Activated CD4-positive, alpha-beta T cell treated with anti-CD3 and anti-CD28 coated beads for 36 hours (primary cell): ENCODE measurements at regions of chr14 and their contacts with region 1.

Region 1: DNA sequence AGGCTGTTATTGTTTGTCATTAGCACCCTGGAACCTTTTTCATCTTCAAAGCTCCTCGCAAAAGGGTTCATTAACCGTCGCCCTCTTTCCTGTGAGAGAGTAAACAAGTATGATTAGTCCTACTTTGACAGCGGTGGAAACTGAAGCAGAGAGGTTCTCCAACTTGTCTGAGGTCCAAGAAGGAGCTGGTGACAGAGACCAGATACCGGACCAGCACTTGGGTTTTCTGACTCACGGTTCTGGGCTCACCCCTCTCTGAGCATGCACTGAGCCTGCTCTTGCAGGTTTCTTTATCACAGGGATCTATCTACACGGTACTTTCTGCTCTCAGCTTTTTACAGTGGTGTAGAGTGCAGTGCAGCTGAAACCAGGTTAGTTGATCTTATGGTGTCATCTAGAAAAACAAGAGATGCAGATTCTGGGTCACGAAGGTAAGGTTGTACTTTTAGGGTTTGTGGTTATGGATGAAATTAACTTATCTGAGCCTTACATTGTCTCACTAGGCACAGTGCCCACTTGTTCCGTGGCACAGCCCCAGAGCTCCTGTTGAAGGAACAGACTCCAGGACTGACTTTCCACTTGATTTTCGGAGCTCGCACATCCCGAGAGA is 62.1 kb downstream of the PPP2R5C start:
- DNase-seq: peak; percentile 87
- ATAC-seq: peak; percentile 80
- H3K4me3 Mint-ChIP-seq: peak overlapping the region; percentile 68
- H3K27ac Mint-ChIP-seq: peak overlapping the region; percentile 97
- H3K4me1 Mint-ChIP-seq: peaks cover 87% of the 10 kb centered on the region
- H3K27me3 Mint-ChIP-seq: no peaks in the 10 kb centered on the region

Region 2: GRCh38 chr14:101707068-101707842 is 116.4 kb before region 1 on chr14:
- CTCF ChIA-PET with region 1: interaction called, 5 read pairs
- POLR2A ChIA-PET with region 1: no interaction called
- intact Hi-C with region 1: loop called (anchors 2 to 5 kb)
- DNase-seq: peak; percentile 74
- ATAC-seq: peak; percentile 79
- H3K4me3 Mint-ChIP-seq: peak overlapping the region; percentile 33
- H3K27ac Mint-ChIP-seq: peak overlapping the region; percentile 81
- H3K4me1 Mint-ChIP-seq: peaks cover 29% of the 10 kb centered on the region
- H3K27me3 Mint-ChIP-seq: no peaks in the 10 kb centered on the region

Region 3: DNA sequence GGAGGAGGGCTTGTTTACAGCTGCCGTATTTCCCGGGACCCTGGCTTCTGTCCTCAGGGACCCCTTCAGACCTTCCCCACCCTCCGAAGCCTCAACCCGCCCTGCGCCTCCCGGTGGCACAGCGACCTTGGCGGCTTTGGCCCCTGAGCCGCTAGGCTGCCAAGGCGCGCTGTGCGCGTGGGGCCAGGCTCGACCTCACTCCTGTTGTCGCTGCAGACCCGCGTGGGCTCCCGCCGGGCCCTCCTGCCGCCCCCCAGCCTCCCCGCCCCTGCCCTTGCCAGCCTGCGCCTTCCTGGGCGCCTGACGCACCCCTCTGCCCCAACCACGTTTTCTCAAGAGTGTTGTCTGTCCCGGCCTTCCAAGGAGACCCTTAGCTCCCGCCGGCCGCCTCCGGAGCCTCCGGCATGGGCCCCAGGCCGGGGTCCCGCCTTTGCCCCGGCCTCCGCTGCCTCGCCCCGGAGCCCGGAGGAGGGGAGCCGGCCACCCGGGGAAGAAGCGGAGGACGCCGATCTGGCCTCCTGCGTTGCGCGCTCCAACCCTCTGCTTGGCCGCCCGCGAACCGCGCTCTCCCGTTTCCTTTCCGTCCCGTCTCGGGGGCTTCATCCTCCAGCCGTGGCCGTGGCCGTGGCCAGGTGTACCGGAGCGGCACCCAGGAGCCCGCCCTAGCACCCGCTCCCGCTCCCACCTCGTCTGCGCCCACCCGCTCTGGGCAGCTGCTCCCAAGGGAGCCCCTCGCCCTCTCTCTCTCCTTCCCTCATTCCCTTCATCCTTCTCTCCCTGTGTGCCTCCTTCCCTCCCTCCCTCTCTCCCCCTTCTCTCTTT is 42.2 kb before region 1 on chr14:
- CTCF ChIA-PET with region 1: interaction called, 5 read pairs
- POLR2A ChIA-PET with region 1: interaction called, 10 read pairs
- intact Hi-C with region 1: no loop called
- DNase-seq: peak; percentile 56
- ATAC-seq: peak; percentile 72
- H3K4me3 Mint-ChIP-seq: peak overlapping the region; percentile 47
- H3K27ac Mint-ChIP-seq: peak overlapping the region; percentile 16
- H3K4me1 Mint-ChIP-seq: peaks cover 30% of the 10 kb centered on the region
- H3K27me3 Mint-ChIP-seq: peaks cover 7% of the 10 kb centered on the region

Region 4: GRCh38 chr14:101843665-101844064 is 20.0 kb after region 1 on chr14:
- CTCF ChIA-PET with region 1: interaction called, 8 read pairs
- POLR2A ChIA-PET with region 1: interaction called, 11 read pairs
- intact Hi-C with region 1: no loop called
- DNase-seq: peak; percentile 78
- ATAC-seq: peak; percentile 66
- H3K4me3 Mint-ChIP-seq: no peak overlapping the region
- H3K27ac Mint-ChIP-seq: peak overlapping the region; percentile 82
- H3K4me1 Mint-ChIP-seq: peaks cover 87% of the 10 kb centered on the region
- H3K27me3 Mint-ChIP-seq: no peaks in the 10 kb centered on the region

Region 5: DNA sequence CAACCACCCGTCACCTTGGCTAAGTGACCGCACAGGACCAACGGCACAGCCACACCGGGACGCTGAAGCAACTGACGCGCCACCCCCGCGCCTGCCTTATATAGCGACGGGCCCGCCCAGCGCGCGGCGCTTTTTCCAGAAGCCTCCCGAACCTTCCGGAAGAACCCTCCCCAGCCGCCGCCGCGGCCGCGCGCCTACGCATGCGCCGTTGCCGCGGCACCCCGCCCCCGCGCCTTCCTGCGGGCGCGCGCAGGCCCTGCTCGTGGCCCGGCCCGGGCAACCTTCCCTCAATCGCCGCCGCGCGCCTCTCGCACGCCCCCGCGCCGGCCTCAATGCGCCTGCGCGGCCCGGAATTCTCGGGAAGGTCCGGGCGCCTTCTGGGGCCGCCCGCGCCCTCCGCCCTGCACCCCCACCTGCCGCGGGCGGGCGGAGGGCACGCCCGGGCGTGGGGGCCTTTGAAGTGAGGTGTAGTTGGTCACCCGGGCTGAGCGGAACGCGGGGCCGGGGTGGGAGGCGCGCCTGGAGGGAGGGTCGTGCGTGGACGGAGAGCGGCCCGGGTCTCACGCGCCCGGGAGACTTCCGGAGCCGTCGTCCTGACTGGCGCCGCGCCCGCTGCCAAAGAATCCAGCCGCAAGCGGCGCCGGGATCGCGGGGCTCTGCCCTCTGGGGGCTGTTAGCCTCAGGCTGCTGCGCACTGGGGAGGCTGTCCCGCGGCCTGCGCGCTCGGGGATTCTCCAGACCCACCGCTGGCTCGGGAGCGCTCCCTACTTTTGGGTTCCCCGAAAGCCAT is 263.6 kb after region 1 on chr14 and contains the start of gene HSP90AA1:
- CTCF ChIA-PET with region 1: interaction called, 6 read pairs
- POLR2A ChIA-PET with region 1: no interaction called
- intact Hi-C with region 1: loop called (anchors 1 to 5 kb)
- DNase-seq: peak; percentile 97
- ATAC-seq: peak; percentile 68
- H3K4me3 Mint-ChIP-seq: peak within 1 kb of the TSS; percentile 77
- H3K27ac Mint-ChIP-seq: peak within 1 kb of the TSS; percentile 92
- H3K4me1 Mint-ChIP-seq: peaks cover 46% of the 10 kb centered on the region
- H3K27me3 Mint-ChIP-seq: no peaks in the 10 kb centered on the region
- total RNA-seq, gene HSP90AA1: 1,344 to 1,372 TPM

Region 6: DNA sequence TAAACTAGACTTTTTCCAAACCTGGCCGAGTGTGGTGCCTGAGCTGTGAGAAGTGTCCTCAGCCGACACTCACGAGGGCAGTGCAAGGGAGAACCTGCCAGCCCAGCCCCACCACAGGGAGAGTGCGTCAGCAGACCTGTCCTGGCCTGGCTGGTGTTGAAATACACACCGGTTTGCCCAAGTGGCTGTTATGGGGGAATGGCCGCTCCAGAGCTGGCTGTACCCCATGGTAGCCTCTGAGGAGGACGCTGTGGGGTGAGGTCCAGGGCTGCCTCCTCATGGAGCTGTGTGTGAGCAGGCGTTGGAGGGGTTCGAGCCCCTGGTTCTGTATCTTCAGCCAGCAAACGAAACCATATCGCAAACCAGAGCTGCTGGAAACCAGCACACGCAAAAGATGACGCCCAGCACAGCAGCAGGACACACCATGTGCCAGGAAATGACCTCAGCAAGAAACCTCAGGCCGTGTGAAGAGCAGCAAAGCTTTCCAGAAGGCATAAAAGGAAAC is 676.6 kb after region 1 on chr14:
- CTCF ChIA-PET with region 1: no interaction called
- POLR2A ChIA-PET with region 1: no interaction called
- intact Hi-C with region 1: no loop called
- DNase-seq: peak; percentile 33
- ATAC-seq: no peak
- H3K4me3 Mint-ChIP-seq: no peak overlapping the region
- H3K27ac Mint-ChIP-seq: peak overlapping the region; percentile 72
- H3K4me1 Mint-ChIP-seq: peaks cover 7% of the 10 kb centered on the region
- H3K27me3 Mint-ChIP-seq: no peaks in the 10 kb centered on the region

Region 7: DNA sequence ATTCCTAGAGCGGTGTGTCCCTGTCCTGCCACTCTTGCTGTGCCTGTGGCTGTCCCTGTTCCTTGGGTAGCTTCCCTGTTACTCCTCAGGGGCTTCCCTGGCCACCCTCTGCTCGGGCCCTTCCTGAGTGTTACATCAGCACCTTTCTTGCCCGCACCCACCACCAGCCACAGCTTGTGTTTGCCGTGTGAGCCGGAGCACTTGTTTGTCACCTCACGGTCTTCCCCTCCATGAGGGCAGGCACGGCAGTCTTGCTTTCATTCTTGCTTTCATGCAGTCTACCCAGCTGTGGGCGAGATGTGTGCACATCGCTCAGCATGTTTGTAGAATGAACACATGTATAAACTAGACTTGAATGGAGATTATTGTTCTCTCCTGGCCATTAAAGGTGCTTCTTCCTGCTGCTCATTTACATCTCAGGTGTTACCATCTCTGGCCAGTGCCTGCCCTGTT is 995.6 kb after region 1 on chr14:
- CTCF ChIA-PET with region 1: no interaction called
- POLR2A ChIA-PET with region 1: interaction called, 3 read pairs
- intact Hi-C with region 1: loop called in 1 of 2 experiments (anchors 5 kb)
- DNase-seq: peak; percentile 91
- ATAC-seq: peak; percentile 74
- H3K4me3 Mint-ChIP-seq: peak overlapping the region; percentile 61
- H3K27ac Mint-ChIP-seq: peak overlapping the region; percentile 94
- H3K4me1 Mint-ChIP-seq: peaks cover 87% of the 10 kb centered on the region
- H3K27me3 Mint-ChIP-seq: no peaks in the 10 kb centered on the region